Activated CD4-positive, alpha-beta memory T cell treated with anti-CD3 and anti-CD28 coated beads, Interleukin-2, amount 10 ng/mL, durations not matched to agents 7 days and 5 days (primary cell): ENCODE measurements at regions of chr4 and their contacts with region 1.

Region 1: GRCh38 chr4:77800483-77801259 is 18.5 kb downstream of the CNOT6L start:
- DNase-seq: no peak
- H3K4me3 Mint-ChIP-seq: peak overlapping the region; percentile 61
- H3K27ac Mint-ChIP-seq: peak overlapping the region; percentile 79
- H3K4me1 Mint-ChIP-seq: peaks cover 52% of the 10 kb centered on the region
- H3K27me3 Mint-ChIP-seq: no peaks in the 10 kb centered on the region

Region 2: GRCh38 chr4:77852892-77853495 is 52.3 kb after region 1 on chr4:
- CTCF ChIA-PET with region 1: no interaction called
- POLR2A ChIA-PET with region 1: interaction called, 14 read pairs
- DNase-seq: peak; percentile 81
- H3K4me3 Mint-ChIP-seq: peak overlapping the region; percentile 73
- H3K27ac Mint-ChIP-seq: peak overlapping the region; percentile 100
- H3K4me1 Mint-ChIP-seq: peaks cover 59% of the 10 kb centered on the region
- H3K27me3 Mint-ChIP-seq: no peaks in the 10 kb centered on the region

Region 3: GRCh38 chr4:77862478-77863216 is 62.0 kb after region 1 on chr4 and contains the start of gene MRPL1:
- CTCF ChIA-PET with region 1: interaction called, 15 read pairs
- POLR2A ChIA-PET with region 1: interaction called, 43 read pairs
- DNase-seq: peak; percentile 90
- H3K4me3 Mint-ChIP-seq: peak within 1 kb of the TSS; percentile 96
- H3K27ac Mint-ChIP-seq: peak within 1 kb of the TSS; percentile 98
- H3K4me1 Mint-ChIP-seq: peaks cover 54% of the 10 kb centered on the region
- H3K27me3 Mint-ChIP-seq: peaks cover 1% of the 10 kb centered on the region
- total RNA-seq, gene MRPL1: 19.7 to 25.4 TPM